Naive thymus-derived CD8-positive, alpha-beta T cell (primary cell): ENCODE measurements at regions of chr12 and their contacts with region 1.

Region 1: GRCh38 chr12:49740930-49741881 is at the start of gene TMBIM6:
- DNase-seq: peak; percentile 90 to 100 (median 98)
- ATAC-seq: peak; percentile 88 to 92
- H3K4me3 Mint-ChIP-seq: peak within 1 kb of the TSS; percentile 87 to 99 (median 97)
- H3K27ac Mint-ChIP-seq: peak within 1 kb of the TSS; percentile 97 to 100 (median 98)
- H3K4me1 Mint-ChIP-seq: peaks cover 19 to 49% (median 42%) of the 10 kb centered on the region in 4 donors
- H3K27me3 Mint-ChIP-seq: peaks cover 0 to 3% (median 0%) of the 10 kb centered on the region in 5 donors
- polyA plus RNA-seq, gene TMBIM6: 817 to 1,126 (median 845) TPM

Region 2: DNA sequence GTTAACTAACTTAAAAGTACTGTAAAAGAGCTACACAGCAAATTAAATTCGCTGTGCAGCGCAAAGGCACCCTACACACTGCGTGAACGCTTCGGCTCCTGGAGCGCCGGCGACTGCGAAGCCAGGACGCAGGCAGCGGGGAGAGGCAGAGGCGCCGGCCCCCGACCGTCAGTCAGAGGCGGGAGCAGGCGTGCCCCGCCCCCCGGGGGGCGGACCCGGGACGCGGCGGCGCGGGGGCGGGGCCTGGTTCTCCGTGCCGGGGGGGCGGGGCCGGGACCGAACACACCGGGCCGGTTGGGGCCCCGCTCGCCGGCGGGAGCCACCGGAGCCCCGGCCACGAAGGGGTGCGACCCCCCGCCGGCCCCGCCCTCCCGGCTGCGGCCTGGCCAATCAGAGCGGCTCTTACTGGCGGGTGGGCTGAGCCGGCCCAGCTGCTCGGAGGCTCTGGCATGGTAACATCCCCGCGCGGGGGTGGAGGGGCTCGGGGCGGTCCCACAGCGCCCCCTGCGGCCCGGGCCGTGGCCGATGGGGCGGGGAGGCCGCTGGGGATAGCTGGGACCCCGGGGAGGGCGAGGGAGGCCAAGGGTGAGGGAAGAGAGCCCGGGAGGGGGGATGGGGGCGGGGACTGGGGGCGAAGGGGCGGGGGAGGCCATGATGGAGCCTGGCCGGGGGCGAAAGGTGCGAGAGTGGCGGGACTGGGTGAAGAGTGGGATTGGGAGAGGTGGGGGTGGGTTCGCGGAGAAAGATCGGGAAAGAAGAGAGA is 117.9 kb before region 1 on chr12 and contains the start of gene PRPF40B:
- POLR2A ChIA-PET with region 1: interaction called, 16 read pairs
- DNase-seq: peak; percentile 80 to 93 (median 88)
- ATAC-seq: peak; percentile 80 to 82
- H3K4me3 Mint-ChIP-seq: peak within 1 kb of the TSS; percentile 82 to 94 (median 91)
- H3K27ac Mint-ChIP-seq: peak within 1 kb of the TSS; percentile 41 to 97 (median 92)
- H3K4me1 Mint-ChIP-seq: peaks cover 10 to 31% (median 23%) of the 10 kb centered on the region in 4 donors
- H3K27me3 Mint-ChIP-seq: peaks cover 0 to 7% (median 0%) of the 10 kb centered on the region in 5 donors
- polyA plus RNA-seq, gene PRPF40B: 1.5 to 4.0 (median 2.3) TPM

Region 3: DNA sequence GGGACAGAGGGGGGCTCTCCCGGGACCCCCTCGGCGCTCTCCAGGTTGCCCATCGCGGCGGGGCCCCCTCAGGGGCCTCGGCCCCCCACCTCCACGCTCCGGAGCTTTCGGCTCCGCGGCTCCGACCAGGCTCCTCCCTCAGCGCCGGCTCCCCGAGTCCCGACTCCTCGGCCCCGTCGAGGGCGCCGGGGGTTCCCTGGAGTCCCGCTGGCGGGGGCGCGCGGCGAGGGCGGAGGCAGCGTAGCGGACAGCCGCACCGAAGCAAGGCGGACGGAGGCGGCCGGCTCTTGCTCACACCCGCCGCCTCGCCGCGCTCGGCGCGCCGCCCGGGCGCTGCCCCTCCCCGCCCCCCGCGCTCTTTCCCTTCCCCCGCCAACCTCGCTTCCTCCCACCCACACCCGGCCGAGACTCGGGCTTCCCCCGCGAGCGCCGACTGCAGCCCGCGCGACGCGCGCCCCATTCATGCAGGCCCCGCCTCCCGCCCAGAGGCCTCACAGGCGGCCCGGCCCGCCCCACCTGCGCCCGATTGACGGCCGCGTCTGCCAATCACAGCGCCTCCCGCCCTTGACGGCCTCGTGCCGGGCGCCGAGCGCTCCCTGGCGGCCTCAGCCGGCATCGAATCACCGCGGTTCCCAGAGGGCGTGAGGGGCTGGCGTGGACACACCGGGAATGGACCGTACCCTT is 33.9 kb before region 1 on chr12 and contains the start of gene FMNL3:
- POLR2A ChIA-PET with region 1: interaction called, 22 read pairs
- DNase-seq: peak; percentile 96 to 99 (median 99)
- ATAC-seq: peak; percentile 93 to 95
- H3K4me3 Mint-ChIP-seq: peak within 1 kb of the TSS; percentile 86 to 96 (median 90)
- H3K27ac Mint-ChIP-seq: peak within 1 kb of the TSS; percentile 80 to 96 (median 92)
- H3K4me1 Mint-ChIP-seq: peaks cover 28 to 49% (median 46%) of the 10 kb centered on the region in 4 donors
- H3K27me3 Mint-ChIP-seq: peaks cover 0 to 3% (median 1%) of the 10 kb centered on the region in 5 donors
- polyA plus RNA-seq, gene FMNL3: 7.6 to 12.1 (median 8.4) TPM

Region 4: GRCh38 chr12:49777800-49778748 is 36.9 kb after region 1 on chr12:
- POLR2A ChIA-PET with region 1: interaction called, 23 read pairs
- DNase-seq: peak; percentile 55 to 87 (median 70)
- ATAC-seq: peak; percentile 84 to 94
- H3K4me3 Mint-ChIP-seq: peak overlapping the region in 3 of 10 donors; percentile 2 to 51 (median 6)
- H3K27ac Mint-ChIP-seq: peak overlapping the region in 3 of 10 donors; percentile 4 to 83 (median 9)
- H3K4me1 Mint-ChIP-seq: peaks cover 10 to 23% (median 16%) of the 10 kb centered on the region in 4 donors
- H3K27me3 Mint-ChIP-seq: peaks cover 8 to 35% (median 19%) of the 10 kb centered on the region in 5 donors

Region 5: DNA sequence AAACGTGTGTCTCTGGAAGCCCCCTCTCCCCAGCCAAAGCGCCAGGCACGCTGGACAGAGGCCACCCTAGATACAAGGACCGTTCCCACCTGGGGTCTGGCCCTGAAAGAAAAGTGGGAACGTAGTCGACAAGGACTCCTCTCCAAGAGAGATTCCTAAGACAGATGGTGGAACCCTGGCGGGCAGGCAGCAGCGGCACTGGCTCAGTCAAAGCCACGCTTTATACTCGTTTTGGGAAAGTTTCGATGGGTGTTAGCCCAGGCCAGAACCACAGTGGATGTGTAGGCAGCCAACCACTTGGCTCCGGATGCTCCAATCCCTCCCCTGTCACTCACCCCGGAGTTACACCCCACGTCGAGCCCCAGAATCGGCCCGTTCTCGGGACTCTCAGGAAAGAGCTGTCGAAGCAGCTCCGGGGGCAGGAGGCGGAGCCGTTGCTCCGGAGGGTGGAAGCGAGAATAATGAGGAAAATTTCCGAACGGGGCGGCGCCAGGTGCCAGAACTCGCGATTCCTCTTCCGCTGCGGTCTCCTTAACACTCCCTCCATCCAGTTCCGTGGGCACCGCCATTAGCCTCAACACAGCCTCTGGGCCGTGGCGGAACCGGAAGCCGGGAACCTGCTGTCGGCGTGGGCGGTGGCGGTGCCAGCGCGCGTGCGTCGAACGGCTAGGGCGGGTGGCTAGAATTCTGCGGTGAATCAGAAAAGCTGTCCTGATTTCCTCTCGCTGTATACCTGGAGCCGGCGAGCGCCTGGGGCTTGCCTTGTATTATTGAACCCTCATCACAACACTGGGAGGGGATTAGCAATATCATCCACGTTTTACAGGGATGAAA is 101.5 kb after region 1 on chr12 and contains the start of gene BCDIN3D:
- POLR2A ChIA-PET with region 1: interaction called, 19 read pairs
- DNase-seq: peak; percentile 86 to 95 (median 89)
- ATAC-seq: peak; percentile 93 to 95
- H3K4me3 Mint-ChIP-seq: peak within 1 kb of the TSS; percentile 89 to 97 (median 94)
- H3K27ac Mint-ChIP-seq: peak within 1 kb of the TSS; percentile 91 to 99 (median 96)
- H3K4me1 Mint-ChIP-seq: peaks cover 17 to 53% (median 43%) of the 10 kb centered on the region in 4 donors
- H3K27me3 Mint-ChIP-seq: no peaks in the 10 kb centered on the region
- polyA plus RNA-seq, gene BCDIN3D: 5.9 to 7.1 (median 6.8) TPM